ENCODE measurements at regions of chr2 and their contacts with region 1.

Region 1: DNA sequence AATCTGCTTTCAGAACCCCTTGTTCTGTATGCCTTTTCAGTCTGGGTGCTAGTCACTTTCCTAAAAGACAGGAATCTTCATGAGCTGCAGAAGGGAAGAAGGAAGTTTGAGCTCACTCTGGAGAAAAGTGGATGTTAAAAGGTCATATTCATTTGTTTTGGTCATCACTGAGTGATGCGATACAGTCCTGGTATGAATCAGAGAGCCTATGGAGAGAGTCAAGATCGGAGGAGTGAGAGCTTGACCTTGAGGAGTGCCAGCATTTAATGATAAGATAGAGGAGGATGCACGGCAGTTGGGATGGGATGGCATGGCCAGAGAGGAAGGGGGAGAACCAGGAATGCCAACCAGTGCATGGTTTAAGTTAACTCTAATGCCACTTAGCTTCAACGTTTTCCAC is 19.6 kb downstream of the USP39 start:
- DNase-seq: no peak
- H3K4me3 Mint-ChIP-seq: no peak overlapping the region
- H3K27ac Mint-ChIP-seq: peak overlapping the region; percentile 5
- H3K4me1 Mint-ChIP-seq: peaks cover 4% of the 10 kb centered on the region
- H3K27me3 Mint-ChIP-seq: no peaks in the 10 kb centered on the region

Region 2: DNA sequence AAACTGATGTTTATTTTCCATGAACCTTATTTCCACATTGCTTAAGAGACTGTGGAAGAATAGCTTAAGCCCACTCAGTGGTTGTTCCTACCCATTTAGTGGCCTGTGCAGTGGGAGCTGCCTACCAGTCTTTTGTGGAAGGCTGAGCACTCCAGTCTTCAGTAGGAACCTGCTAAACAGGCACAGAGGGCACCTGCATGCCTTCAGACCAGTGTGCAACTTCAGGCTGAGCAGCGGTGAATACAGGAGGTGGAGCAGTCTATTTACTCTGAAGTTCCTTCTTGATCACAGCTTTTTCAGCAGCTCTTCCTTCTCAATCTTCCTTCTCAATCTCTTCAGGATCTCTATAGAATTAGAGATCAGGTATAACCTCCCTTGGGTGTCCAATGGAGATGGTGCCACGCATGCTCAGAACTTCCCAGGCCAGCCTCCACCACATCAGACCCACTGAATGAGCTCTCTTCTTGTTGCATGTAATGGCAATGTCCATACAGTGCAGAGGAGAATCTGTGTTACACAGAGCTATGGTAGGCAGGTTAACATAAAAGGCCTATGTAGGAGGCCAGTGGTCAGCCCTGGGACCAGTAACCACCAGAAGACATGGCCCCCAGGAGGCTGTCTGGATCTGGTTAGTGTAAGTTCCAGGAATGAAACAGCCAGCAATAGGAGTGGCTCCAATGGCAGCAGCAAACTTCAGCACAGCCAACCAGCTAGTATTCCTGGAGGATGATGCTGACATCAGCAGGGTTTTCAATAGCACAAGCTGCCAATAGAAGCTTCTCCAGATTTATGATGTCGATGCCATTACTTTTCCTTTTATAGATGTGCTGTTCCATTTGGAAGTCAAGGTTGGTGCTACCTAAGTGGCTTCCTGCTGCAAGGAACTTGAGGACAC is 144.5 kb before region 1 on chr2:
- CTCF ChIA-PET with region 1: no interaction called
- DNase-seq: no peak
- H3K4me3 Mint-ChIP-seq: no peak overlapping the region
- H3K27ac Mint-ChIP-seq: no peak overlapping the region
- H3K4me1 Mint-ChIP-seq: no peaks in the 10 kb centered on the region
- H3K27me3 Mint-ChIP-seq: peaks cover 7% of the 10 kb centered on the region

Region 3: DNA sequence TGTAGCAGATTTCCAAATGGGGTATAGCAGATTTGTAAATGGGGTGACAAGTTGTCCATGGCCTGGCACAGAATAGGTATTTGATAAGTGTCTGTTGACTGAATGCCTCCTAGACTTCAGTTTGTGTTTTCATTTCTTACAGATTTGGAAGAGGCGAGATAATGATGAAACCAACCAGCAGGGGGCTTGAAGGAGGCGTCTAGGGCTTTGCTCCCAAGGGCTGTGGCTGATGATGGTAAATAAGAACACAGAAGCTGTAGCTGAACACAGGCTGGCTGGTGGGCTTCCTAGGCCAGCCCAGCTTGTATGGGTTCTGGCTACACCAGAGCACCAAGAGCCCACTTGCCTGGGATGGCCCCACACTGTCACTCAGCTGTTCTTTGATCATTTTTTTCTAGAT is 13.0 kb after region 1 on chr2:
- CTCF ChIA-PET with region 1: interaction called, 34 read pairs
- DNase-seq: peak; percentile 48
- H3K4me3 Mint-ChIP-seq: no peak overlapping the region
- H3K27ac Mint-ChIP-seq: peak overlapping the region; percentile 2
- H3K4me1 Mint-ChIP-seq: no peaks in the 10 kb centered on the region
- H3K27me3 Mint-ChIP-seq: no peaks in the 10 kb centered on the region

Region 4: GRCh38 chr2:85656468-85656867 is 20.8 kb after region 1 on chr2:
- CTCF ChIA-PET with region 1: interaction called, 34 read pairs
- DNase-seq: no peak
- H3K4me3 Mint-ChIP-seq: no peak overlapping the region
- H3K27ac Mint-ChIP-seq: no peak overlapping the region
- H3K4me1 Mint-ChIP-seq: no peaks in the 10 kb centered on the region
- H3K27me3 Mint-ChIP-seq: no peaks in the 10 kb centered on the region

Region 5: DNA sequence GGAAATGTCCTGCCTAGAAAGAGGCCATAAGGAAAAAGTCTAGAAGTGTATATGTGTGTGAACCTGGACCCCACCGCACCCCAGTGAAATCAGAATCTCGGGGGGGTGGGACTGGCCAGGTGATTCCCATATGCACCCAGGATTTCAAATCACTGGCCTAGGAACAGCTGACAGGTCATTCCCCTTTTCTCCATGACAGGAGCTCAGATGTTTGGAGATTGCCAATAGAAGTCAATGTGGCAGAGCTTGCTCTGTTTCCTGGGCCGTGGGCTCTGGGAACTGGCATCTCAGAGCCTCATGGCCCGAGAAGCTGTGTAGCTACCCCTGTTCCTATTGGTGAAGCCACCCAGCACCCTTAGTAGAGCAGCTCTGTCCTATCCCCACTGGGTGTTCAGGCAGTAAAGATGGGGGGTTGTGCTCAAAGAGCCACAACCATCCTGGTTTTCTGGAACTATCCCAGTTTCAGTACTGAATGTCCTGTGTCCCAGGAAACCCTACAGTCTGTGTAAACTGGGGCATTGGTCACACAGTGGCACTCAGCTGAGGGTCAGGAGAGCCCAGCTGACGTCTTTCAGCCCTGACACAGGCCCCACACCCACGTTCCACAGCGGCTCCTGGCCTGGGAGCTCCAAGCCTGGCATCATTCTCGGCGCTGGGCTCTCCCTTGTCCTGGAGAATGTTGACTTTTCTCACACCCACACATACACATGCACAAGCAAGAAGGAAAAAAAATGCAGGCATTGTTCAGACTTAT is 77.4 kb after region 1 on chr2:
- CTCF ChIA-PET with region 1: interaction called, 34 read pairs
- DNase-seq: no peak
- H3K4me3 Mint-ChIP-seq: no peak overlapping the region
- H3K27ac Mint-ChIP-seq: peak overlapping the region; percentile 40
- H3K4me1 Mint-ChIP-seq: peaks cover 42% of the 10 kb centered on the region
- H3K27me3 Mint-ChIP-seq: peaks cover 42% of the 10 kb centered on the region

Measured in activated naive CD4-positive, alpha-beta T cell treated with anti-CD3 and anti-CD28 coated beads, Interleukin-2, amount 10 ng/mL, durations not matched to agents 7 days and 5 days (primary cell).